Transverse colon (tissue), 4 donors: ENCODE measurements at regions of chr3 and their contacts with region 1.

Region 1: DNA sequence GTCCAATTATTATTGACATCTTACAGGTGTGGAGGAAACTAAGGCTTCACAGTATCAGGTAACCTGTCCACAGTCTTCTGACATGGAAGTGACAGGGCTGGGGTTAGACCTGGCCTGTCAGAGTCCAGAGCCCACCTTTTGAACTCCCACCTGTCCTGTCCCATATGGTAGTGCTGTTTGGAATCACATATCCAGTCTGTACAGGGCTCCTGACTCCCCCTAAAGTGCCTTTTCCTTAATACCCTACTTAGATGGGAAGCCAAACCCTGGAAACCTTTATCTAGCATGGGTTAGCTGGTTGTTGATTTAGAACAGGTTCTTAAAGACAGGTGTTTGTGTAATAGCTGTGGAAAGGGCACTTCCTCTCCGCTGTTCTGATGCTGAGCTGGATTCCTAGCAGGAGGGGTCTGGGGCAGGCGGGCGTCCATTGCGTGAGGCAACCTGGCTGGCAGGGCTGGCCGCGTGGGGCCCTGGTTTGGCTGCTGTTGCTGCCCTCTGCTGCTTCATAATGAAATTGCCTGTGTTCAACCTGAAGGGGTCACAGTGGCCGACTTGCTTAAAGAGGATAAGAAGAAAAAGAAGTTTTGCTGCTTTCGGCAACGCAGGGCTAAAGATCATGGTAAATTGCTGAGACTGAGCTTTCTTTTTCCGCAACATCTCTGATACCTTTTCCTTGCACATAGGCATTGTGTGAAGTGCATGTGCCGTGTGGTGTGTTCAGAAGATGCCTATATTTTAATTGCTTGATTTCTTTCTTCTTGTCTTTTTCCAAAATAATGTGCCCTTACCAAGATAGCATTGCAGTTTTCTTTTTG is 136.2 kb downstream of the CHDH start:
- DNase-seq: peak; percentile 60
- H3K4me3 ChIP-seq: no peak overlapping the region
- H3K27ac ChIP-seq: no peak overlapping the region
- H3K4me1 ChIP-seq: peaks cover 0 to 6% (median 0%) of the 10 kb centered on the region in 4 donors
- H3K27me3 ChIP-seq: no peaks in the 10 kb centered on the region
- CTCF ChIP-seq: peak; percentile 75 to 82 (median 80)
- EP300 ChIP-seq: no peak
- POLR2A ChIP-seq: no peak

Region 2: DNA sequence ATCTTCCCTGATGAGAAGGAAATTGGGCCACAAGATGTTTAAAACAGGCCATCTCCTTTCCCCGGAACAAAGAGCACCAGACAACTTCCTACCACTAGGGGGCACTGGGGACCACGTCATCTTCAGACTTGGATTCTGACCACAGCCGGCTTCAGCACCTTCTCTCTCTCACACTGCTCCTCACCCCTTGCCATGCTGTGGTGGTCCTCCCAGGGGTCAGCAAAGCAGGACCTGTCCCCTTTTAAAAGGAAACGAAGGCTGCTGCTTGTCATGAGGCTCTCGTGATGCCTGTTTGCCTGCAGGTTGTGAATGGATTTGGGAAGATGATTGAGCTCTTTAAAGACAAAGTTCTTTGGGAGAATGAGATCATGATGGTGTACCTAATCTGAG is 596.1 kb before region 1 on chr3:
- in situ Hi-C with region 1: loop called in 1 of 4 experiments (anchors 25 kb)
- intact Hi-C with region 1: no loop called
- DNase-seq: peak; percentile 86
- H3K4me3 ChIP-seq: no peak overlapping the region
- H3K27ac ChIP-seq: peak overlapping the region in 3 of 4 donors; percentile 57 to 76 (median 58)
- H3K4me1 ChIP-seq: peaks cover 0 to 17% (median 5%) of the 10 kb centered on the region in 4 donors
- H3K27me3 ChIP-seq: no peaks in the 10 kb centered on the region
- CTCF ChIP-seq: peak; percentile 89 to 95 (median 92)
- EP300 ChIP-seq: no peak
- POLR2A ChIP-seq: no peak

Region 3: GRCh38 chr3:53293867-53294266 is 416.2 kb before region 1 on chr3:
- in situ Hi-C with region 1: loop called in 2 of 4 experiments (anchors 10 kb)
- intact Hi-C with region 1: loop called (anchors 5 kb)
- DNase-seq: no peak
- H3K4me3 ChIP-seq: no peak overlapping the region
- H3K27ac ChIP-seq: no peak overlapping the region
- H3K4me1 ChIP-seq: no peaks in the 10 kb centered on the region
- H3K27me3 ChIP-seq: no peaks in the 10 kb centered on the region
- CTCF ChIP-seq: no peak
- EP300 ChIP-seq: no peak
- POLR2A ChIP-seq: no peak

Region 4: GRCh38 chr3:53303957-53304356 is 406.1 kb before region 1 on chr3:
- in situ Hi-C with region 1: loop called in 3 of 4 experiments (anchors 10 kb)
- intact Hi-C with region 1: loop called (anchors 5 kb)
- DNase-seq: no peak
- H3K4me3 ChIP-seq: no peak overlapping the region
- H3K27ac ChIP-seq: no peak overlapping the region
- H3K4me1 ChIP-seq: peaks cover 0 to 7% (median 3%) of the 10 kb centered on the region in 4 donors
- H3K27me3 ChIP-seq: no peaks in the 10 kb centered on the region
- CTCF ChIP-seq: no peak
- EP300 ChIP-seq: no peak
- POLR2A ChIP-seq: no peak

Region 5: DNA sequence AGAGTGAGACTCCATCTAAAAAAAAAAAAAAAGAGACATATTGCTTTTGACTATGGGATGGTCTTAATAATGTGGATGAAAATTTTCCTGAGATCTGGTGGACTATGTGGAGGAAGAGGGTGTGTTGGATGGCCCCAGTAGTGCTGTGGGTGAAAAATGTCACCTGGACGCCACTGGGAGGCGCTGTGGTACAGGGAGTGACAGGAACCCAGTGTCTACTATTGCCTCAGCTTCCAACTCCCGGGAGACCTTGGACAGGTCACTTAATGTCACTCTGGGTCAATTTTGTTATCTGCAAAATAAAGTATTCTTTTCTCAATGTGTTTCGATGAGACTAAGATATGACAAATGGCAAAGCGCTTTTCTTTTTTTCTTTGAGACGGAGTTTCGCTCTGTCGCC is 335.0 kb before region 1 on chr3:
- in situ Hi-C with region 1: loop called (anchors 5 to 10 kb)
- intact Hi-C with region 1: loop called (anchors 5 kb)
- DNase-seq: peak; percentile 71
- H3K4me3 ChIP-seq: no peak overlapping the region
- H3K27ac ChIP-seq: no peak overlapping the region
- H3K4me1 ChIP-seq: no peaks in the 10 kb centered on the region
- H3K27me3 ChIP-seq: no peaks in the 10 kb centered on the region
- CTCF ChIP-seq: peak; percentile 74 to 90 (median 81)
- EP300 ChIP-seq: no peak
- POLR2A ChIP-seq: no peak